Posterior vena cava (tissue), 2 donors: ENCODE measurements at regions of chr1 and their contacts with region 1.

Region 1: DNA sequence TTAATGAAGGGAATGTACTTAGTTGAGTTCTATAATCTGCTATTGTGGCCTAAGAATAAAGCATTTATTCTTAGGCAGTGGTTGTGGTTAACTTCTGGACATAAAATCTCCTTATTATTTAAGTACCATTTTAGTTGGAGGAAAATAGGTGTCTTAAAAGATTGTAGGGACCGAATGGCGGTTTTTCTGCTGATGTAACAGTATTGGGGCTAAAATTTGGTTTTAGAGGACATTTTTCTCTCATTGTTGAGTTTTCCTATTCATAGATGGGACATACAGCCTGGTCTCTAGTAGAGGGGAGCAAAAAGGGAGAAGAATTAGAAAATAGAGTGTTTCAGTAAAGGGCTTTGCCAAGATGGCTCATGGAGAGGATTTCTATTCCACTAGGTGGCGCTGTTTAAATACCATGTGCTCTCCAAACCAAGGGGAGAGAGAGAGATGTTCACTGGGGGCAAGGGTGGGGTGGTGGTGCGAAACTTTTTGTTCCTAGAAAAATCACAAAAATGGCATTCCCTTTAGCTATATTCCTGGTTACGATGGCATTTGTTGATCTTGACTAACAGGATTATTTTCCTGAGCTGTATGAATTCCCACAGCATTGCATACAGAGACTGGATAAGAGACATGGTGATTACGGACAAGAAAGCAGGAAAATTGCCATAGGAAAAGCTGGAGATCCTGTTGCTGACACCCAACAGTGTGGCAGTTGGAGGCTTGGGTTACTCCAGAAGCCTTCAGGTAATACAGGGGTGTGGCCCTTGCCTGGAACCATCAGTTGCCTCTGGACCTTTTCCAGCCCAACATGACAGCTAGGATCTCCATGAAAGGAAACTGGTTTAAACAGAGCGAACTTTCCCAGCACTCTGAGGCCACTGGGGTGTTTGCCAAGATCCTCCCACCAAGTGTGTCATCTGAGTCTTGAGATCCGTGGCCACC is 18.2 kb upstream of the FCGR2A start:
- DNase-seq: peak; percentile 82

Region 2: GRCh38 chr1:161738627-161739287 is 251.7 kb after region 1 on chr1:
- intact Hi-C with region 1: loop called in 1 of 2 experiments (anchors 5 kb)
- DNase-seq: no peak